ENCODE measurements at regions of chr7 and their contacts with region 1.

Region 1: GRCh38 chr7:78924581-78924980 is 528.9 kb downstream of the MAGI2 start:
- ATAC-seq: no peak
- H3K4me3 ChIP-seq: no peak overlapping the region
- H3K27ac ChIP-seq: no peak overlapping the region
- H3K4me1 ChIP-seq: no peaks in the 10 kb centered on the region

Region 2: DNA sequence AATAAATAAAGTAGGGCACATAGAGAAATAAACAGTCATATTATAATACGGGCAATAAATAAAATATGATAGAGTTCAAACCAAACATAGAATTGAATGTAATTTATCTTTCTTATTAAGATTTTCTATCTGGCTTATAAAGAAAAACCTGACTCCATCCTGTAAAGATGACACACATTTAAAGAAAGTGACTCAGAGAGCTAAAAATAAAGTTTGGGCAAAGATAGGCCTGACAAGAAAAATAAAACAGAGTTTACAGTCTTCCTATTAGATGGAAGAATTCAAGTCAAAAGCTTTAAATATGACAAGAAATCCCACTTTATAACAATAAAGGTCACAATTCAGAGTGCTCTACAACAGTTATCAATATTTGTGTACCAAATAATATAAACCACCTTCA is 545.4 kb before region 1 on chr7:
- in situ Hi-C with region 1: loop called in 1 of 9 experiments (anchors 25 kb)
- ATAC-seq: peak in 1 of 8 experiments; percentile 31
- H3K4me3 ChIP-seq: no peak overlapping the region
- H3K27ac ChIP-seq: no peak overlapping the region
- H3K4me1 ChIP-seq: no peaks in the 10 kb centered on the region

Region 3: GRCh38 chr7:78587443-78588044 is 337.0 kb before region 1 on chr7:
- in situ Hi-C with region 1: loop called in 1 of 9 experiments (anchors 25 kb)
- ATAC-seq: peak in 3 of 8 experiments; percentile 56 to 74 (median 71)
- H3K4me3 ChIP-seq: no peak overlapping the region
- H3K27ac ChIP-seq: no peak overlapping the region
- H3K4me1 ChIP-seq: no peaks in the 10 kb centered on the region

Measured in motor neuron (in vitro differentiated cells).